A673 (cell line): ENCODE measurements at regions of chr15 and their contacts with region 1.

Region 1: DNA sequence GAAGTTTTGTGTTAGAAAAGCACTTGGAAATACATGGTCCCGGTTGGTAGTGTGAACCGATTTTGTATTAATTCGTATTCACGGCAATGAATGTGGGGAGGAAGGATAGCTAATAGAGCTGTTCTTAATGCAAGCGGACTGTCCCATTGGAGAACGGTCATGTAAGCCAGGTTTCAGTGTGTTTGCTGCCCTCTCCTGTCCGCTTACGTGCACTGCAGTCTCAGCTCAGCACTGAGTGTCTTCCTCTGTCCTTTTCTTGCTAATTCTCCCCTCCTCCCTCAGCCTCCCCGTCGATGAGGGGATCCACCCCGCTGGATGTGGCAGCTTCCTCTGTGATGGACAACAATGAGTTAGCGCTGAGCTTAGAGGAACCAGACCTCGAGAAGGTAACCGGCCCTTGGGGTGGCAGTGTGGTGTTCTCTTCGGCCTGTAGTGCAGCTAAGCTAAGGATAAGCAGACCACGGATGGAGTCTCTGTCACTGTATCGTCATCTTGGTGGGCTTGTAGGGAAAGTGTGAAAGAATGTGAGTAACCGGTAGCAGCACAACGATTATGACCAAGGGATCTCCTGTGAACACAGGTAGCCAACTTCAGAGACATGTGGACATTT is 267.5 kb upstream of the CHRM5 start:
- DNase-seq: peak; percentile 77
- H3K4me3 ChIP-seq: no peak overlapping the region
- H3K27ac ChIP-seq: no peak overlapping the region
- H3K4me1 ChIP-seq: no peaks in the 10 kb centered on the region
- H3K27me3 ChIP-seq: peaks cover 23% of the 10 kb centered on the region
- CTCF ChIP-seq: peak; percentile 92

Region 2: GRCh38 chr15:33086507-33087121 is 614.2 kb before region 1 on chr15:
- CTCF ChIA-PET with region 1: interaction called, 5 read pairs
- POLR2A ChIA-PET with region 1: no interaction called
- intact Hi-C with region 1: loop called (anchors 10 kb)
- DNase-seq: peak; percentile 60
- H3K4me3 ChIP-seq: no peak overlapping the region
- H3K27ac ChIP-seq: no peak overlapping the region
- H3K4me1 ChIP-seq: peaks cover 7% of the 10 kb centered on the region
- H3K27me3 ChIP-seq: peaks cover 12% of the 10 kb centered on the region
- CTCF ChIP-seq: peak; percentile 74

Region 3: GRCh38 chr15:33234014-33234461 is 466.8 kb before region 1 on chr15:
- CTCF ChIA-PET with region 1: no interaction called
- POLR2A ChIA-PET with region 1: no interaction called
- intact Hi-C with region 1: loop called (anchors 1 kb)
- DNase-seq: peak; percentile 34
- H3K4me3 ChIP-seq: no peak overlapping the region
- H3K27ac ChIP-seq: no peak overlapping the region
- H3K4me1 ChIP-seq: no peaks in the 10 kb centered on the region
- H3K27me3 ChIP-seq: peaks cover 30% of the 10 kb centered on the region
- CTCF ChIP-seq: peak; percentile 58

Region 4: GRCh38 chr15:33292717-33293307 is 408.0 kb before region 1 on chr15:
- CTCF ChIA-PET with region 1: interaction called, 32 read pairs
- POLR2A ChIA-PET with region 1: no interaction called
- intact Hi-C with region 1: loop called (anchors 2 kb)
- DNase-seq: peak; percentile 77
- H3K4me3 ChIP-seq: no peak overlapping the region
- H3K27ac ChIP-seq: no peak overlapping the region
- H3K4me1 ChIP-seq: no peaks in the 10 kb centered on the region
- H3K27me3 ChIP-seq: peaks cover 3% of the 10 kb centered on the region
- CTCF ChIP-seq: peak; percentile 83

Region 5: GRCh38 chr15:33644319-33644718 is 56.5 kb before region 1 on chr15:
- CTCF ChIA-PET with region 1: interaction called, 16 read pairs
- POLR2A ChIA-PET with region 1: no interaction called
- intact Hi-C with region 1: no loop called
- DNase-seq: no peak
- H3K4me3 ChIP-seq: no peak overlapping the region
- H3K27ac ChIP-seq: no peak overlapping the region
- H3K4me1 ChIP-seq: no peaks in the 10 kb centered on the region
- H3K27me3 ChIP-seq: peaks cover 95% of the 10 kb centered on the region
- CTCF ChIP-seq: no peak

Region 6: DNA sequence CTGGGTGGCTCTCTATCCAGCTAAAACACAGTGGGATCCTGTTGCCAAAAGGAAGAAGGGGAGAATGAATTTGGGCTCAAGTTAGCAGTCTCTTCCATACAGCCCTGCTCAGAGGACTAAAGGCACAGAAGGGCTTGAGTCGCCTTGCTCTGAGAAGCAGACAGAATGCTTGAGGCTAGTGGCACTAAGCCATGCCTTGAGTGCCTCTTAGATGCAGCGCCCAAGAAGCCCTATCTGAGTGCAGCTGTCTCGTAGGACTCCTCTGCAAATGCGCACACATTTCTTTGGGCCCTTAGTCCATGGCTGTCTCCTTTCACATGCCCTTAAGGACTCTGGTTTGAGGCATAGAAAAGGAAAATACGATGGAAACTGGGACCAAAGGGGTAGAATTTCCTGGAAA is 56.2 kb after region 1 on chr15:
- CTCF ChIA-PET with region 1: no interaction called
- POLR2A ChIA-PET with region 1: no interaction called
- intact Hi-C with region 1: loop called (anchors 10 kb)
- DNase-seq: no peak
- H3K4me3 ChIP-seq: no peak overlapping the region
- H3K27ac ChIP-seq: no peak overlapping the region
- H3K4me1 ChIP-seq: no peaks in the 10 kb centered on the region
- H3K27me3 ChIP-seq: peaks cover 5% of the 10 kb centered on the region
- CTCF ChIP-seq: no peak